CD4-positive, alpha-beta memory T cell (primary cell): ENCODE measurements at regions of chr6 and their contacts with region 1.

Region 1: GRCh38 chr6:151323791-151324487 is 67.4 kb downstream of the ZBTB2 start:
- DNase-seq: peak; percentile 45 to 69 (median 66)
- H3K4me3 ChIP-seq: no peak overlapping the region
- H3K4me3 Mint-ChIP-seq: peak overlapping the region in 7 of 8 donors; percentile 59 to 87 (median 71)
- H3K27ac ChIP-seq: no peak overlapping the region
- H3K27ac Mint-ChIP-seq: peak overlapping the region in 1 of 7 donors; percentile 67
- H3K4me1 ChIP-seq: peaks cover 16% of the 10 kb centered on the region
- H3K4me1 Mint-ChIP-seq: peaks cover 11 to 25% (median 21%) of the 10 kb centered on the region in 4 donors
- H3K27me3 ChIP-seq: peaks cover 7% of the 10 kb centered on the region
- H3K27me3 Mint-ChIP-seq: peaks cover 25 to 46% of the 10 kb centered on the region in 2 donors

Region 2: GRCh38 chr6:150891888-150892485 is 432.0 kb before region 1 on chr6:
- CTCF ChIA-PET with region 1: interaction called, 860 read pairs
- POLR2A ChIA-PET with region 1: interaction called, 13 read pairs
- intact Hi-C with region 1: loop called (anchors 1 kb)
- DNase-seq: peak; percentile 50 to 59 (median 50)
- H3K4me3 ChIP-seq: no peak overlapping the region
- H3K4me3 Mint-ChIP-seq: no peak overlapping the region
- H3K27ac ChIP-seq: no peak overlapping the region
- H3K27ac Mint-ChIP-seq: peak overlapping the region in 1 of 7 donors; percentile 1
- H3K4me1 ChIP-seq: peaks cover 17% of the 10 kb centered on the region
- H3K4me1 Mint-ChIP-seq: peaks cover 8 to 21% (median 19%) of the 10 kb centered on the region in 4 donors
- H3K27me3 ChIP-seq: no peaks in the 10 kb centered on the region
- H3K27me3 Mint-ChIP-seq: no peaks in the 10 kb centered on the region

Region 3: GRCh38 chr6:151014404-151015100 is 309.4 kb before region 1 on chr6:
- CTCF ChIA-PET with region 1: interaction called, 167 read pairs
- POLR2A ChIA-PET with region 1: interaction called, 4 read pairs
- intact Hi-C with region 1: loop called (anchors 1 kb)
- DNase-seq: peak in 4 of 5 donors; percentile 50 to 56 (median 52)
- H3K4me3 ChIP-seq: no peak overlapping the region
- H3K4me3 Mint-ChIP-seq: peak overlapping the region in 5 of 8 donors; percentile 2 to 62 (median 50)
- H3K27ac ChIP-seq: no peak overlapping the region
- H3K27ac Mint-ChIP-seq: peak overlapping the region in 4 of 7 donors; percentile 6 to 87 (median 58)
- H3K4me1 ChIP-seq: peaks cover 4% of the 10 kb centered on the region
- H3K4me1 Mint-ChIP-seq: peaks cover 3 to 7% (median 4%) of the 10 kb centered on the region in 4 donors
- H3K27me3 ChIP-seq: no peaks in the 10 kb centered on the region
- H3K27me3 Mint-ChIP-seq: no peaks in the 10 kb centered on the region

Region 4: DNA sequence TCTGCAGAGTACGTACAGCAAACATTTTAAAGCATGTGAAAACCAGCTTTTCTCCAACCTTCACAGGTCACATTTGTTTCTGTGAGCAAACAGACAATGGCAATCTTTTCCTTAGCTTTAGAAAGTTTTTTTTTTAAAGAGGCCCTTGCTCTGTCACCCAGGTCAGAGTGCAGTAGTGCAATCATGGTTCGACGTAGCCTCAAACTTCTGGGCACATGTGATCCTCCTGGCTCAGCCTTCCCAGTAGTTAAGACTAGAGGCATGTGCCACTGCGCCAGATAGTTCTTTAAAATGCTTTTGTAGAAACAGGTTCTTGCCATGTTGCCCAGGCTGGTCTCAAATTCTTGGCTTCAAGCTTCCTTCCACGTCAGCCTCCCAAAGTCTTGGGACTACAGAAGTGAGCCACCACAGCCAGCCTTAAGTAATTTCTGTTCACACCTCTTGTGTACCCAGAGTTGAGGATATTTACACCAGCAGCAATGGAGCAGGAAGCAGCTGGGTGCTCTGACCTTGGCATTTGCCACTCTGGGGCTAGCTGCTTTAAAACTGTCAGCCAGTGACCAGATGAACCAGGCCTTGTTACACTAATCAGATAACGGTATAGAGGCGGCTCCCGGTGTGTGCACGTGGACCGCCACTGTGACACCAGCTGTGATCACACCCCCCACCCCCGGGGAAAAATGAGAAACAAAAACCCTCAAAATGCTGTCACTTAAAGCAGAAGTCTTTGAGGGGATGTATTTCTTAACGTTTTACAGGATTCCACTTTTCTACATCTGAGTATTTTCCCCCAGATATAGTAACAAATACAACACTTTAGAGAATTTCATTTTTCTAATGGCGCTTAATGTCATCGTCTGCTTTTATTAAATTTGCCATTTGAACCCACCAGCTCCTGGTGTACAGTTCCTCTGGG is 12.8 kb before region 1 on chr6:
- CTCF ChIA-PET with region 1: interaction called, 13 read pairs
- POLR2A ChIA-PET with region 1: no interaction called
- intact Hi-C with region 1: no loop called
- DNase-seq: no peak
- H3K4me3 ChIP-seq: no peak overlapping the region
- H3K4me3 Mint-ChIP-seq: no peak overlapping the region
- H3K27ac ChIP-seq: no peak overlapping the region
- H3K27ac Mint-ChIP-seq: no peak overlapping the region
- H3K4me1 ChIP-seq: no peaks in the 10 kb centered on the region
- H3K4me1 Mint-ChIP-seq: no peaks in the 10 kb centered on the region
- H3K27me3 ChIP-seq: no peaks in the 10 kb centered on the region
- H3K27me3 Mint-ChIP-seq: peaks cover 4 to 5% of the 10 kb centered on the region in 2 donors